ENCODE measurements at regions of chr17 and their contacts with region 1.

Region 1: DNA sequence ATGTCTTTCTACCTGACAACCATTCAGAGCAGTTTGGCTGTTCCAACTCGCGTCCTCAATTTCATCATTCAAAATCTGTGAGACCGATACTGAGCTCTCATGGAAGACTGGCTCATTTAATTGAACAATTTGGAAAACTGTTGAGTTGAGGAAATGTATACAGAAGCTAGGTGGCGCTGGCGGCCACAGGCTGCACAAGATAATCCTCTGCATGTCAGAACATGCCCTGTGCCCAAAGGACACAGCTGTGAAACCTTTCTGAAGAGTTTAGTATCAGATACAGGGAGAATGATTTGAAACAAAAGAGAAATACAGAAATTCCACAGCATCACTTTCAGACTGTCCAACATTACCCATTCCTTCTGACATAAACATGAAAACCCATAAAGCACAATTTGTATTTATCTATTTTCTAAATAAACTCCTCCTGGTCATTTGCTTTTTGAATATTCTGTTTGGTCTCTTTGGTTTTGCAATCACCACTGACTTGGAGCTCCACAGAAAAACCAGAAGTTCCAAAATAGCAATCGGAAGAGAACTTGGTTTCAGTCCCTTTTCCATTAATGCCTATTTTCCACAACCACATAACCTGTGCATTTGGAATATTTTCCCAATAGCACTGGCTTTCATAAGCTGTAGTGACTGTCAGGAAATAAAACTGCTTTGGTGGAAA is 192.8 kb downstream of the MAP2K6 start:
- DNase-seq: peak; percentile 84
- H3K4me3 Mint-ChIP-seq: peak overlapping the region; percentile 13
- H3K27ac Mint-ChIP-seq: peak overlapping the region; percentile 97
- H3K4me1 Mint-ChIP-seq: peaks cover 30% of the 10 kb centered on the region
- H3K27me3 Mint-ChIP-seq: no peaks in the 10 kb centered on the region
- CTCF ChIP-seq: peak; percentile 83

Region 2: DNA sequence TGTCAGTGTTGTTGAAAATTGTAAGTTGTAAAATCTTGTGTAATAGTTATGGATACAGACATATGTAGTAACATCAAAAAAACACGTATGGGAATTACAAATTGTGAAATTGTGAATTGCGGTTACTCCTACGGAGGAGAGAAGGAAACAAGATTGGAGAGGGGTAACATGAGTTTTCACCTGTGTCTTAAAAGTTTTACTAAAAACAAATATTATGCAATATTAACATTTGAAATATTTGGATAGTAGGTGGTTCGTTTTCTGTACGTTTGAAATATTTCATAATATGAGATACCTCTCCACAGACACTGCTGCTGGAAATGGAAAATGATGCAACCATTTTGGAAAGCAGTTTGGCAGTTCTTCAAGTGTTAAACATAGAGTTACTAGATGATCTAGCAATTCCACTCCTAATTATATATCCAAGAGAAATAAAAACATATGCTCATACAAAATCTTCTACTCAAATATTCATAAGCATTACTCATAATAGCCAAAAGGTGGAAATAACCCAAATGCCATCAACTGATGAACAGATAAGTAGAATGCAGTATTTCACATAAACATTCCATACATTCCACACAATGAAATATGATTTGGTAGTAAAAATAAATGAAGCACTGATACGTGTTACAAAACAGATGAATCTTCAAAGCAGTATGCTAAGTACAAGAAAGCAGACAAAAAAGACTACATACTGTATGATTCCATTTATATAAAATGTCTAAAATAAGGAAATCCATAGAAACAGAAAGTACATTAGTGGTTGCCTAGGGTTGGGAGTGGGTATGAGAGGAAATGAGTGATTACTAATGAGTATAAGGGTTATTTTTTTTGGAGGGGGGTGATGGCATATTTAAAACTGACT is 337.9 kb before region 1 on chr17:
- CTCF ChIA-PET with region 1: no interaction called
- POLR2A ChIA-PET with region 1: no interaction called
- intact Hi-C with region 1: no loop called
- DNase-seq: peak; percentile 90
- H3K4me3 Mint-ChIP-seq: peak overlapping the region; percentile 15
- H3K27ac Mint-ChIP-seq: peak overlapping the region; percentile 1
- H3K4me1 Mint-ChIP-seq: peaks cover 18% of the 10 kb centered on the region
- H3K27me3 Mint-ChIP-seq: no peaks in the 10 kb centered on the region
- CTCF ChIP-seq: no peak

Region 3: GRCh38 chr17:69575346-69575761 is 31.9 kb before region 1 on chr17:
- CTCF ChIA-PET with region 1: interaction called, 13 read pairs
- POLR2A ChIA-PET with region 1: interaction called, 3 read pairs
- intact Hi-C with region 1: no loop called
- DNase-seq: peak; percentile 45
- H3K4me3 Mint-ChIP-seq: no peak overlapping the region
- H3K27ac Mint-ChIP-seq: no peak overlapping the region
- H3K4me1 Mint-ChIP-seq: no peaks in the 10 kb centered on the region
- H3K27me3 Mint-ChIP-seq: no peaks in the 10 kb centered on the region
- CTCF ChIP-seq: no peak

Region 4: DNA sequence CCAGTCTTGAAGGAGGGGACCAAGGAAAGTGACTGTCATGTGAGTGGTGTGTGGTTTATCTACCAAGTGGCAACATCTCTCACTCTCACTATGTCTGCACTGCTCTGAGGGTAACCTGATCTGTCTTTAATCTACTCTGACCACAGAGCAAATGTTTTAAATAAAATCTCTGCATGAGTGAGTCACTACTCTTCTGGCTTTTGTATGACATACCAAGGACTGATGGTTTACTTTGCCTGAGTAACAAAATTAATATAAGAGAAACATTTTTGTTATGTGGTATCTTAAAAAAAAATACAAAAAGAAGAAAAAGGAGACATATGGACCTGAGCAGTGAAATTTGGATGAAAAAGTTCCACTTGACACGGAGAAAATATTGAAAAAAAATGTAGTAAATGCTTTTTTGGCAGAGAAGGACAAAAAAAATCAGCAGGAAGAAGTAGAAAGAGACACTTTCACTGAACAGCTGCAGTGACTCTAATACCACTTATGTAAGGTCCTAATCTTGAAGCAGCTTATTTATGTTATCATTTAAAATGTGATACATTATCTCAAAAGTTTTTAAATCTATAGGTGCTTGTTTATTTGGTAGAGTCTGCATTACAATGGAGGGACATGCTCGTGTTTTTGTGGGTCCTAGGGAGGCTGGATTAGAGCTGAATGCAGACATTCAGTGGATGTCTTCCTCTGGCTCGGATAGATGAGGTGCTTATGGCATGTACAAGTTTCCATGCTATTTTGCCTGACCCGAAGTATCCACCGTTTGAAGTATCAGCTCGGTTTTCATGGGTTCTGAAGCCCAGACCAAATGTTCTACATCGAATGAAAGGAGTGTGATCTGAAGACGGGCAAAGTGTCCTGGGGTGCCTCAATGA is 47.9 kb after region 1 on chr17:
- CTCF ChIA-PET with region 1: no interaction called
- POLR2A ChIA-PET with region 1: no interaction called
- intact Hi-C with region 1: no loop called
- DNase-seq: peak; percentile 60
- H3K4me3 Mint-ChIP-seq: no peak overlapping the region
- H3K27ac Mint-ChIP-seq: peak overlapping the region; percentile 59
- H3K4me1 Mint-ChIP-seq: peaks cover 14% of the 10 kb centered on the region
- H3K27me3 Mint-ChIP-seq: no peaks in the 10 kb centered on the region
- CTCF ChIP-seq: no peak

Region 5: DNA sequence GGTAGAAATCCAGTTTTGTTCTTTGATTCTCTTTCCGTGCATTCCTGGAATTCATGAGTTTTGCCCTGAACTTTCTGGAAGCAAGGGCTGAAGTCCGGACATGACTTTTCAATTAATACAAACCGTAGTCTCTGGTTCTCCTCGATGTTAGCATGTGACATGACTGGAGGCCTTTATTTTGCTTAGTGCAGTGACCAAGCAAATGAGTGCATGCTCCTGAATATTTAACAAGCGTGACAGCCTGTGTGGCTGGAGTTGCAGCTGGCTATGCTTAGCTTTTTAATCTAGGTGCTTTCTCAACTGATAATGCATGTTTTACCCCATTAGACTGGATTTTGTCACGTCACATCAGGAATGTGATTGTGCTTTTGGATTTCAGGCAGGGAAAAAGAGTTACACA is 109.3 kb after region 1 on chr17:
- CTCF ChIA-PET with region 1: no interaction called
- POLR2A ChIA-PET with region 1: no interaction called
- intact Hi-C with region 1: no loop called
- DNase-seq: no peak
- H3K4me3 Mint-ChIP-seq: no peak overlapping the region
- H3K27ac Mint-ChIP-seq: no peak overlapping the region
- H3K4me1 Mint-ChIP-seq: no peaks in the 10 kb centered on the region
- H3K27me3 Mint-ChIP-seq: no peaks in the 10 kb centered on the region
- CTCF ChIP-seq: no peak

Region 6: GRCh38 chr17:69761751-69762321 is 154.5 kb after region 1 on chr17:
- CTCF ChIA-PET with region 1: interaction called, 7 read pairs
- POLR2A ChIA-PET with region 1: interaction called, 24 read pairs
- intact Hi-C with region 1: loop called (anchors 2 kb)
- DNase-seq: peak; percentile 93
- H3K4me3 Mint-ChIP-seq: peak overlapping the region; percentile 15
- H3K27ac Mint-ChIP-seq: peak overlapping the region; percentile 91
- H3K4me1 Mint-ChIP-seq: peaks cover 58% of the 10 kb centered on the region
- H3K27me3 Mint-ChIP-seq: no peaks in the 10 kb centered on the region
- CTCF ChIP-seq: no peak

Region 7: GRCh38 chr17:70022175-70022574 is 414.9 kb after region 1 on chr17:
- CTCF ChIA-PET with region 1: no interaction called
- POLR2A ChIA-PET with region 1: no interaction called
- intact Hi-C with region 1: no loop called
- DNase-seq: no peak
- H3K4me3 Mint-ChIP-seq: no peak overlapping the region
- H3K27ac Mint-ChIP-seq: no peak overlapping the region
- H3K4me1 Mint-ChIP-seq: no peaks in the 10 kb centered on the region
- H3K27me3 Mint-ChIP-seq: no peaks in the 10 kb centered on the region
- CTCF ChIP-seq: no peak

Region 8: GRCh38 chr17:70100983-70101382 is 493.7 kb after region 1 on chr17:
- CTCF ChIA-PET with region 1: interaction called, 8 read pairs
- POLR2A ChIA-PET with region 1: no interaction called
- intact Hi-C with region 1: loop called (anchors 1 kb)
- DNase-seq: peak; percentile 24
- H3K4me3 Mint-ChIP-seq: no peak overlapping the region
- H3K27ac Mint-ChIP-seq: no peak overlapping the region
- H3K4me1 Mint-ChIP-seq: peaks cover 23% of the 10 kb centered on the region
- H3K27me3 Mint-ChIP-seq: no peaks in the 10 kb centered on the region
- CTCF ChIP-seq: peak; percentile 14

Region 9: GRCh38 chr17:70144260-70144846 is 537.1 kb after region 1 on chr17:
- CTCF ChIA-PET with region 1: interaction called, 90 read pairs
- POLR2A ChIA-PET with region 1: interaction called, 70 read pairs
- intact Hi-C with region 1: loop called (anchors 1 kb)
- DNase-seq: peak; percentile 49
- H3K4me3 Mint-ChIP-seq: no peak overlapping the region
- H3K27ac Mint-ChIP-seq: peak overlapping the region; percentile 33
- H3K4me1 Mint-ChIP-seq: no peaks in the 10 kb centered on the region
- H3K27me3 Mint-ChIP-seq: no peaks in the 10 kb centered on the region
- CTCF ChIP-seq: peak; percentile 44

Region 10: DNA sequence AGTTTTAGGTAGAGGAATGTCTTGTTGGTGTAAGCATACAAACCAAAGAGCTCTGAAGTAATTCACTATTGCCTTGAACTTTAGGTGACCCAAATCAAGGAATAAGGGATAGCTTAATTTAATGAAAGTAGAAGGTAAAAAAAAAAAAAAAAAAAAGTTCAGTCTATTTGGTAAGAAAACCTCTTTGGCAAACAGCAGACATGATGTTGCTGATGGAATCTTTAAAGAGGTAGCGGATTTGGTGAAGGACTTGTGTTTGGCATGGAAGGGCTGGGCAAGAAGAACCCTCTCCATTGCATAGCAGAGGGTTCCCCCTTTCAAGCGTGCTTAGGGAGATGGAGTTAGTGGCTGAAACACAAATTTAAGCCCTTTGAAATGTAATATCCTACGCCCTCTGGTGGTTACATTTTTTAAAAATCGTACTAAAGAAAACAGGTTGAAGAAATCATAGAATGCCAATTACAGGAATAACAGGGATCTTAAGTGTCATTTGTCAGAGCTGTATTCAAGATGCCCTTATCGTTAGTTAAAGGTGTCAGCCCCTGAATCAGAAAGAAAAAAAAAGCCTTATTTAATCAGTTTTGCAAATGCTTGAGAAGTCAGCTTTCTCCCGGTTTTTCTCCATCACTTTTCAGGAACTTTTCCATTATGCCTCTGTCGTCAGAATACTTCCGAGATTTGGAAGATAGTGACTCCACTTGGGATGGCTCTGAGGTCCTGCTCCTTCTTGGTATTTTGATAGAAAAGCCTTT is 945.1 kb after region 1 on chr17:
- CTCF ChIA-PET with region 1: interaction called, 12 read pairs
- POLR2A ChIA-PET with region 1: interaction called, 5 read pairs
- intact Hi-C with region 1: loop called (anchors 5 kb)
- DNase-seq: peak; percentile 57
- H3K4me3 Mint-ChIP-seq: no peak overlapping the region
- H3K27ac Mint-ChIP-seq: no peak overlapping the region
- H3K4me1 Mint-ChIP-seq: peaks cover 8% of the 10 kb centered on the region
- H3K27me3 Mint-ChIP-seq: no peaks in the 10 kb centered on the region
- CTCF ChIP-seq: peak; percentile 54

Measured in MCF 10A (cell line).